ENCODE measurements at regions of chr4 and their contacts with region 1.

Region 1: DNA sequence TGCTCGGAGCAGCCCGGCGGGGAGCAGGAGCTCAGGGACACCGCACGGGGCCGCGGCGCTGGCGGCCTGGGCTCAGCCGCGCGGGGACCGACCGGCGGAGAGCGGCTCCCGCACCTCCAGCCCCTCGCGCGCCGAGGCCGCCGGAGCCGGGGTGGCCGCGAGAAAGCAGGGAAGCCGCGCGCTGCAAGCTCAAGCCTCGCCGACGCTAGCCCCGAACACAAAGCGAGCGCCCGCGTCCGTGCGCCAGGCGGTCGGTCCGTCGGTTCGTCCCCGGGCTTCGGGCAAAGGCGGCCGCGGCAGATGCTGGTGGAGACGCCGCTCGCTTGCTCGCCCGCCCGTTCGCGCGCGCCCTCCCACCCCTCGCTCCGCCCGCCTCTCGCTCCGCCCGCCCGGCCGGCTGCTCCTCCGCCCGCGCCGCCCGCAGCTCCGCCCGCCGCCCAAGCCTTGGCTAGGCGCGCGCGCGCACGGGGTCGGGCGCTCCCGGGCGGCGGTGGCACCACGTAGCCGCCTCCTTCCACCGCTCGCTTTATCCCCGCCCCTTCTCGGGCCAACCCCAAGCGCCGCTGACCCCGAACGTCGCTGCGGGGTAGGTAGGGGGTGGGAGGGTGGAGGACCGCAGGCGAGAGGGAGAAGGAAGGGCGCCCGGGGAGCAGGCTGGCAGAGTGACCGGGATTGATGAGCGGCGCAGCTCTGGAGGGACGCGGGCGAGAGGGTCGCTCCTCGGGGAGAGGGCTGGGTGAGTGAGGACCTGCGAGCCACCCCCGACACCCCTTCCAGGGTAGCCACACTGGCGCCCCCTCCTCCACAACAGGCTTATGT is at the start of gene TSPAN5:
- DNase-seq: no peak
- H3K4me3 ChIP-seq: peak within 1 kb of the TSS; percentile 64 to 87 (median 82)
- H3K27ac ChIP-seq: peak within 1 kb of the TSS; percentile 82 to 91 (median 88)
- H3K4me1 ChIP-seq: peaks cover 24 to 90% (median 58%) of the 10 kb centered on the region in 3 donors
- H3K27me3 ChIP-seq: no peaks in the 10 kb centered on the region
- CTCF ChIP-seq: no peak
- POLR2A ChIP-seq: peak in 2 of 4 donors; percentile 32 to 59
- total RNA-seq, gene TSPAN5: 10.9 to 19.0 (median 13.9) TPM

Region 2: GRCh38 chr4:98474408-98474844 is 184.1 kb before region 1 on chr4:
- intact Hi-C with region 1: loop called (anchors 5 kb)
- DNase-seq: no peak
- H3K4me3 ChIP-seq: no peak overlapping the region
- H3K27ac ChIP-seq: peak overlapping the region in 2 of 4 donors; percentile 26 to 55
- H3K4me1 ChIP-seq: peaks cover 3 to 35% (median 5%) of the 10 kb centered on the region in 3 donors
- H3K27me3 ChIP-seq: no peaks in the 10 kb centered on the region
- CTCF ChIP-seq: no peak
- POLR2A ChIP-seq: no peak